BJ (cell line): ENCODE measurements at regions of chr3 and their contacts with region 1.

Region 1: GRCh38 chr3:49021813-49022687 is at the start of gene NDUFAF3:
- DNase-seq: peak; percentile 51
- H3K4me3 ChIP-seq: peak within 1 kb of the TSS; percentile 88
- H3K27me3 ChIP-seq: no peaks in the 10 kb centered on the region
- CTCF ChIP-seq: peak; percentile 97
- polyA plus RNA-seq, gene NDUFAF3: 65.1 and 89.5 TPM in 2 replicates

Region 2: GRCh38 chr3:49007068-49007770 is 14.8 kb before region 1 on chr3 and contains the start of gene WDR6:
- CTCF ChIA-PET with region 1: interaction called, 30 read pairs
- POLR2A ChIA-PET with region 1: interaction called, 19 read pairs
- DNase-seq: peak; percentile 84
- H3K4me3 ChIP-seq: peak within 1 kb of the TSS; percentile 96
- H3K27me3 ChIP-seq: no peaks in the 10 kb centered on the region
- CTCF ChIP-seq: peak; percentile 50
- polyA plus RNA-seq, gene WDR6: 100 and 164 TPM in 2 replicates

Region 3: GRCh38 chr3:49032646-49033304 is 10.7 kb after region 1 on chr3:
- CTCF ChIA-PET with region 1: interaction called, 10 read pairs
- POLR2A ChIA-PET with region 1: interaction called, 3 read pairs
- DNase-seq: no peak
- H3K4me3 ChIP-seq: no peak overlapping the region
- H3K27me3 ChIP-seq: no peaks in the 10 kb centered on the region
- CTCF ChIP-seq: no peak

Region 4: GRCh38 chr3:49093853-49094767 is 72.1 kb after region 1 on chr3 and contains the start of gene QRICH1:
- CTCF ChIA-PET with region 1: interaction called, 20 read pairs
- POLR2A ChIA-PET with region 1: no interaction called
- DNase-seq: peak; percentile 93
- H3K4me3 ChIP-seq: peak within 1 kb of the TSS; percentile 79
- H3K27me3 ChIP-seq: no peaks in the 10 kb centered on the region
- CTCF ChIP-seq: peak; percentile 74
- polyA plus RNA-seq, gene QRICH1: 51.8 and 77.3 TPM in 2 replicates